ENCODE measurements at regions of chr5 and their contacts with region 1.

Region 1: GRCh38 chr5:100777680-100778281 is 125.3 kb downstream of the ST8SIA4 start:
- DNase-seq: no peak
- H3K4me3 Mint-ChIP-seq: peak overlapping the region; percentile 30
- H3K27ac Mint-ChIP-seq: peak overlapping the region; percentile 31
- H3K4me1 Mint-ChIP-seq: peaks cover 41% of the 10 kb centered on the region
- H3K27me3 Mint-ChIP-seq: no peaks in the 10 kb centered on the region

Region 2: GRCh38 chr5:100535060-100536005 is 242.4 kb before region 1 on chr5 and contains the start of gene FAM174A:
- intact Hi-C with region 1: loop called (anchors 2 kb)
- DNase-seq: peak; percentile 93
- H3K4me3 Mint-ChIP-seq: peak within 1 kb of the TSS; percentile 92
- H3K27ac Mint-ChIP-seq: peak within 1 kb of the TSS; percentile 92
- H3K4me1 Mint-ChIP-seq: peaks cover 20% of the 10 kb centered on the region
- H3K27me3 Mint-ChIP-seq: peaks cover 9% of the 10 kb centered on the region
- total RNA-seq, gene FAM174A: 8.9 and 11.5 TPM in 2 replicates

Region 3: DNA sequence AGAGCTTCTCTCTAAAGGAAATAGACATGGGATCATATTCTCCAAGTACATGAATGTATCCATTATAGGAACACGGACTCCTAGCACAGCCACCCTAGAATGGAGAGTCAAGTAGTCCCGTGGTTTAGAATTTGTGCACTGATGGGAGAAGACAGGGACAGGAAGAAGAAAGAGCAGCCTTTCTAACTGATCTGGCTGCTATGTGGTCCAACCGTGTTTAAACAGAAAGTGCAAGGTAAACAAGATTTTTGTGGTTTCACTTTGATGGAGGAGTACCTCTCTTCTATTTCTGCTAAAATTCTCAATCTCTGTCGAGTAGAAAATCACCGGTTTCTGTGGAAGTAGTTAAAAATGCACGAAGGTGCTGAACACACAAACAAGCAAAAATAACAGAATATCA is 46.0 kb before region 1 on chr5:
- intact Hi-C with region 1: loop called (anchors 5 kb)
- DNase-seq: peak; percentile 26
- H3K4me3 Mint-ChIP-seq: peak overlapping the region; percentile 66
- H3K27ac Mint-ChIP-seq: peak overlapping the region; percentile 81
- H3K4me1 Mint-ChIP-seq: peaks cover 20% of the 10 kb centered on the region
- H3K27me3 Mint-ChIP-seq: no peaks in the 10 kb centered on the region

Region 4: DNA sequence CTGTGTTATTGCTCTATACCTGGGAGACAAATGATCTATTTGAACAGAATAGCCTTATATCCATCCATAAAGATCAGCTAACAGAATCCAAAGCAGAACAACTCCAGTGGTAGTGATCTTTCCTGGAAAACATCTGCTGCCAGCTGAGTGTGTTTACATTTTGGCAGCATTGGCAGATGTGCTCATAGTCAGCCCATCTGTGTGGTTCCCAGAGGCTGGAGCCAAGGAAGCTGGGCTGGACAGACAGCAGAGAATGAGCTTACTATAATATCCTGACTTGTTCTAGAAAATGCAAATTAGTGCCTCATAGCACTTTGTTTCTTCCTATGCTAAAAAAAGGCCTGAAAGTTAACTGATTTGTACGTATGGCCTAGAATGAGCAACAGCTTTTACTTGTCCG is 25.6 kb after region 1 on chr5:
- intact Hi-C with region 1: no loop called
- DNase-seq: no peak
- H3K4me3 Mint-ChIP-seq: no peak overlapping the region
- H3K27ac Mint-ChIP-seq: no peak overlapping the region
- H3K4me1 Mint-ChIP-seq: peaks cover 2% of the 10 kb centered on the region
- H3K27me3 Mint-ChIP-seq: no peaks in the 10 kb centered on the region

Region 5: DNA sequence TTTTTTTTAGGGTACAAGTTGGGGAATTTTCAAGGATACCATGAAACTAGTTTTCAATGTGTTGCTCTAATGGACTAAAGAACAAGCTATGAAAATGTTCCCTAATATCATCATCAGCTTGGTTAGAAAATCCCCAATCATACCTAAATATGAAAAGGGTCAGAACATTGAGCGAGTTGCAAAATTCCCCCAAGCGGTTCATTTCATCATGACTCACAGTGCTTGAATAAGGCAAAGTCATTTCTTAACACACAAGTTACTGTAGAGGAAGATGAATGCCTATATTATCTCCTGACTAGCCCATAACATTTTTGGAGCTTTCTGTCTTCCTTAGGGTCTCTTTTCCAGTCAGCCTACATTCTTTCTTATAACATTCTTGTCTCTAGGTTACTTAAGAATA is 62.6 kb after region 1 on chr5:
- intact Hi-C with region 1: loop called (anchors 1 kb)
- DNase-seq: no peak
- H3K4me3 Mint-ChIP-seq: no peak overlapping the region
- H3K27ac Mint-ChIP-seq: peak overlapping the region; percentile 93
- H3K4me1 Mint-ChIP-seq: peaks cover 73% of the 10 kb centered on the region
- H3K27me3 Mint-ChIP-seq: no peaks in the 10 kb centered on the region

Region 6: GRCh38 chr5:100890461-100891008 is 112.8 kb after region 1 on chr5:
- intact Hi-C with region 1: loop called (anchors 1 kb)
- DNase-seq: no peak
- H3K4me3 Mint-ChIP-seq: peak overlapping the region; percentile 75
- H3K27ac Mint-ChIP-seq: peak overlapping the region; percentile 93
- H3K4me1 Mint-ChIP-seq: peaks cover 74% of the 10 kb centered on the region
- H3K27me3 Mint-ChIP-seq: no peaks in the 10 kb centered on the region